ENCODE measurements at regions of chr12 and their contacts with region 1.

Region 1: GRCh38 chr12:49763006-49763591 is 21.7 kb downstream of the TMBIM6 start:
- DNase-seq: peak; percentile 85
- ATAC-seq: peak; percentile 74
- H3K4me3 Mint-ChIP-seq: peak overlapping the region; percentile 42
- H3K27ac Mint-ChIP-seq: peak overlapping the region; percentile 94
- H3K4me1 Mint-ChIP-seq: peaks cover 60% of the 10 kb centered on the region
- H3K27me3 Mint-ChIP-seq: no peaks in the 10 kb centered on the region

Region 2: DNA sequence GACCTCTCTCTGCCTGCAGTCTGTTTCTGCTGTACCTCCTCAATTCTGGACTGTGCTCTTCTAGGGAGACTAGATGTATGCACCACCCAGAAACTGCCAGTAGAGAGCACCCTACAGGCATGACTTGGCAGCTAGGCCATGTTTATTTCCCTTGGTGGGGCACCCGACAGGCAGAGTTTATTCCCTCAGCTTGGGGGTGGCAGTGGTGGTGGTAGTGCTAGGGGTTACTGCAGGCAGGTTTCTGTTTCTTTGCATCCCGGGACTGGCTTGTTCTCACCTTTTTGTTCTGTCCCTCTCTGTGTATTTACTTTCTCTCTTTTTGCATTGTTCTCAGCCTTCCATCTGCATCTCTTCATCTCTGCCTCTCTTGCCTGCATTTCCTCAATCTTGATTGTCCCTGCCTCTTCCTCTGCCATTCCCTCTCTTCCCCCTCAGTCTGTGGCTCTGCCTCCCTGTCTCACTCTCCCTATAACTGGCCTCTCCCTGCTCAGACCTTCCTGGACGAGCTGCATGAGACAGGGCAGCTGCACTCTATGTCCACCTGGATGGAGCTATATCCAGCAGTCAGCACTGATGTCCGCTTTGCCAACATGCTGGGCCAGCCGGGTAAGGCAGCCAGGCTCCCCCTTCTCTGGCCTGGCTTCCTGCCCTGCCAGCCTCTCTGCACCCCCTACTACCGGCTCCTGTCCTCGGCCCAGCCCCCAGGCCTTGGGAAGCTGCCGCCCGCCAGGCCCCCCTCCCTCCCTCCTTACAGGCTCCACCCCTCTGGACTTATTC is 125.9 kb before region 1 on chr12:
- CTCF ChIA-PET with region 1: interaction called, 17 read pairs
- POLR2A ChIA-PET with region 1: interaction called, 3 read pairs
- DNase-seq: peak; percentile 79
- ATAC-seq: peak; percentile 89
- H3K4me3 Mint-ChIP-seq: no peak overlapping the region
- H3K27ac Mint-ChIP-seq: peak overlapping the region; percentile 28
- H3K4me1 Mint-ChIP-seq: peaks cover 31% of the 10 kb centered on the region
- H3K27me3 Mint-ChIP-seq: no peaks in the 10 kb centered on the region

Region 3: DNA sequence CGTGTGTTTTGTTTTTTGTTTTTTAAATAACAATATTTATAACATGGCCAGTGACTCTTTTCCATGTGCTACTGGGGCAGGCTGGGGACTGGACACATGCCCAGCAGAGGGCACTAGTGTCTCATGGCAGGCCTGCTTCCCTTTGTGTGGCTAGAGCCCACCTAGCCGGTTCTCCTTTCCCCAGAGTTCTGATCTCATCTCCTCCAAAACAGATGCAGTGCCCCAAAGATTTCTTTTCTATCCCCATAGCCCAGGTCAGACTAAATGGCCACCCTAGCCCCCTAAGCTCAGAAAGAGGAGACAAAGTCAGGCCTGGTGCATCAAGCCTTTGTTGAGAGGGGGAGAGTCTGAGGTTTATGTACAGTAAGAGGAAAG is 118.5 kb before region 1 on chr12:
- CTCF ChIA-PET with region 1: interaction called, 16 read pairs
- POLR2A ChIA-PET with region 1: no interaction called
- DNase-seq: peak; percentile 89
- ATAC-seq: peak; percentile 96
- H3K4me3 Mint-ChIP-seq: no peak overlapping the region
- H3K27ac Mint-ChIP-seq: peak overlapping the region; percentile 87
- H3K4me1 Mint-ChIP-seq: peaks cover 41% of the 10 kb centered on the region
- H3K27me3 Mint-ChIP-seq: no peaks in the 10 kb centered on the region

Region 4: DNA sequence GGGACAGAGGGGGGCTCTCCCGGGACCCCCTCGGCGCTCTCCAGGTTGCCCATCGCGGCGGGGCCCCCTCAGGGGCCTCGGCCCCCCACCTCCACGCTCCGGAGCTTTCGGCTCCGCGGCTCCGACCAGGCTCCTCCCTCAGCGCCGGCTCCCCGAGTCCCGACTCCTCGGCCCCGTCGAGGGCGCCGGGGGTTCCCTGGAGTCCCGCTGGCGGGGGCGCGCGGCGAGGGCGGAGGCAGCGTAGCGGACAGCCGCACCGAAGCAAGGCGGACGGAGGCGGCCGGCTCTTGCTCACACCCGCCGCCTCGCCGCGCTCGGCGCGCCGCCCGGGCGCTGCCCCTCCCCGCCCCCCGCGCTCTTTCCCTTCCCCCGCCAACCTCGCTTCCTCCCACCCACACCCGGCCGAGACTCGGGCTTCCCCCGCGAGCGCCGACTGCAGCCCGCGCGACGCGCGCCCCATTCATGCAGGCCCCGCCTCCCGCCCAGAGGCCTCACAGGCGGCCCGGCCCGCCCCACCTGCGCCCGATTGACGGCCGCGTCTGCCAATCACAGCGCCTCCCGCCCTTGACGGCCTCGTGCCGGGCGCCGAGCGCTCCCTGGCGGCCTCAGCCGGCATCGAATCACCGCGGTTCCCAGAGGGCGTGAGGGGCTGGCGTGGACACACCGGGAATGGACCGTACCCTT is 55.8 kb before region 1 on chr12 and contains the start of gene FMNL3:
- CTCF ChIA-PET with region 1: interaction called, 19 read pairs
- POLR2A ChIA-PET with region 1: no interaction called
- DNase-seq: peak; percentile 98
- ATAC-seq: peak; percentile 96
- H3K4me3 Mint-ChIP-seq: peak within 1 kb of the TSS; percentile 90
- H3K27ac Mint-ChIP-seq: peak within 1 kb of the TSS; percentile 83
- H3K4me1 Mint-ChIP-seq: peaks cover 42% of the 10 kb centered on the region
- H3K27me3 Mint-ChIP-seq: peaks cover 26% of the 10 kb centered on the region
- total RNA-seq, gene FMNL3: 53.5 to 54.5 TPM

Region 5: DNA sequence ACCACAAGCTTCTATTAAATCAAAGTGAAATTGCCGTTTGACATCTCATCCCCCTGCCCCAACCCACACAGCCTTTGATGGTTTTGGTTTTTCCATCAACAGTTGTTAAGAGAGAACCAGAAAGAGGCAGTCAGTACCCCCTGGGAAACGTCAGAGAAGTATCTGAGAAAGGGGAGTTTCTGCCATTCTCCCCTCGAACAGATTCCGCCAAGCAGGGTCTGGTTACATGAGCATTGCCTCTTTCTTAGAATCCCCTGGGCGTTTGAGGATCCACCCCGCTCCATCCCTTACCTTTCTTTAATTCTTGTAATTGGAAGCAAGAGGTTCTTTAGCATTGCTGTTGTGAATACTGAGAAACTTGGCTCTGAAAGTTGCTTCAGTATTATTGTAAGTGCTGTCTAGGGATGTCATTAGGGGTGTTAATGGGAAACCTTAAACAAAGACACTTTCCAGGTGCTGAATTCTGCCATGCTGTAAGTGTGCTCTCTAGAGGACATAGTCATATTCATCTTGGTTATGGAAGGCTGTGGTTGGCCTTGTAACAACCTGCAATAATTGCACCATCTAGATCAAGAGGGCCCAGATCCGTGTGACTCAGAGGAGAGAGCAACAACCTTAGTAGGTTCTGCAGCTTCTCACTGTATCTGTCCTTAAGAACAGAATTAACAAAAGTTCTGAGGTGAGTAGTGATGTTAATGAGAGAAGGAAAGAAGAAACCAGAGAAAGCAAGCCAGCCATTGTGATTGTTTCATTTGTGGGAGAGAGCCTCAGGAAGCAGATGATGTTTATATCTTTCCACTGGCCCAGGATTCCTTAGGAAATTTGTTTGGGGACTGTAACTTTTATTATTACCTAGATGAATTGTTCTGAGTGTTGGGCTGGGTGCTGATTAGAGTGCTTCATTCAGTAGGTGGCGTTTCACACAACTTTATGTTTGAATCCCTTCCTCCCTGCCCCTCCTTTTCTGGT is 12.8 kb before region 1 on chr12:
- CTCF ChIA-PET with region 1: interaction called, 69 read pairs
- POLR2A ChIA-PET with region 1: interaction called, 6 read pairs
- DNase-seq: peak; percentile 59
- ATAC-seq: peak; percentile 85
- H3K4me3 Mint-ChIP-seq: peak overlapping the region; percentile 9
- H3K27ac Mint-ChIP-seq: peak overlapping the region; percentile 72
- H3K4me1 Mint-ChIP-seq: peaks cover 76% of the 10 kb centered on the region
- H3K27me3 Mint-ChIP-seq: no peaks in the 10 kb centered on the region

Region 6: DNA sequence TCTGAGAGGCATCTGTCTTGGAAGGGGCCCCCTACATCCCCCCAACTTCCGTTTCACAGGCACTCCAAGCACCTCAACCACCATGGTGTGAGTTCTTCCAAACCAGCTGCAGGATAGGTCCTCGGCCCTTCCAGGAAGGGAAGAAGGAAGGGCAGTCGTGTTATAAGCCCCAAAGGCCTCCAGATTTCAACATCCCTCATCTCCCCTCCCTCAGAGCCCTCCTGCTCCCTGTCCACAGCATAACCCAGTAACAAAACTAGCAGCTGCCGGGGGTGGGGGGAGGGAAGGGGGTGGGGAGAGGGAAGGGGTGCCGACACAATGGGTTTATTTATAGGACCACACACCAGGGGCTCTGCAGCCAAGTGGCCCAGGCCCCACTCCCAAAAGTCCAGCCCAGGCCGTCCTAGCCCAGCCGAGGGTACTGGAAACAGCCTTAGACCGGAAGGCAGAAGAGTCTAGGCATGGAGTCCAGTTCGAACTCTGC is 46.8 kb after region 1 on chr12:
- CTCF ChIA-PET with region 1: interaction called, 10 read pairs
- POLR2A ChIA-PET with region 1: no interaction called
- DNase-seq: no peak
- ATAC-seq: no peak
- H3K4me3 Mint-ChIP-seq: no peak overlapping the region
- H3K27ac Mint-ChIP-seq: peak overlapping the region; percentile 55
- H3K4me1 Mint-ChIP-seq: peaks cover 13% of the 10 kb centered on the region
- H3K27me3 Mint-ChIP-seq: no peaks in the 10 kb centered on the region

Measured in activated CD8-positive, alpha-beta T cell treated with anti-CD3 and anti-CD28 coated beads, Interleukin-2, amount 10 ng/mL, durations not matched to agents 7 days and 5 days (primary cell).